Gastrocnemius medialis (tissue), 4 donors: ENCODE measurements at regions of chr4 and their contacts with region 1.

Region 1: DNA sequence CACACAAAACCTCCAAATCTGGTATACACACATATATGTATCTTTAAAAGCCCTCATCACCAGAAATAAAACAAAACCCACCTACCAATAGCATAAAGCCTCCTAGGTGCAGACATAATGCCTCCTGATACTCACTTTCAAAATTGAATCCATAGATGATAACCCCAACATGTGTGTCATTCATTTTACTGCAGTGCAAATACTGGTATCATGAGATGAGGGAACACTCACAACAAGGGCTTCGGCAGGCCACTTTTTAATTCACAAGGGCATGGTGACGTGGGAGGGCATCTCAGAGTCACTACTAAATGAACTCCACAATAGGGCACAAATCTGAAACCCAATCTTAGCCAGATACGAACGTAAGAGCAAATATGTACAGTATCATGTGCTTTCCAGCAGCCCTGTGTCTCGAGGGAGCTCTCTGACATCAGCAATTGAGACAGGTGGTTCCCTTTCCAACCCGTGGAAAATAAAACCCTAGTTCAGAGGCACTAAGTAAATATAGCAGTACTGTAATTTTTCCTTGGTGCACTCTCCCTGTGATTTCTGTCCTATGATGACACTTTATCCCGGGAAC is 14.1 kb upstream of the PPARGC1A start:
- DNase-seq: peak; percentile 65 to 84
- ATAC-seq: peak; percentile 95 to 97
- H3K4me3 ChIP-seq: peak overlapping the region; percentile 6 to 27 (median 22)
- H3K27ac ChIP-seq: peak overlapping the region; percentile 64 to 84 (median 80)
- H3K4me1 ChIP-seq: peaks cover 12 to 20% of the 10 kb centered on the region in 2 donors
- H3K27me3 ChIP-seq: no peaks in the 10 kb centered on the region
- CTCF ChIP-seq: no peak
- POLR2A ChIP-seq: peak; percentile 37 to 67

Region 2: DNA sequence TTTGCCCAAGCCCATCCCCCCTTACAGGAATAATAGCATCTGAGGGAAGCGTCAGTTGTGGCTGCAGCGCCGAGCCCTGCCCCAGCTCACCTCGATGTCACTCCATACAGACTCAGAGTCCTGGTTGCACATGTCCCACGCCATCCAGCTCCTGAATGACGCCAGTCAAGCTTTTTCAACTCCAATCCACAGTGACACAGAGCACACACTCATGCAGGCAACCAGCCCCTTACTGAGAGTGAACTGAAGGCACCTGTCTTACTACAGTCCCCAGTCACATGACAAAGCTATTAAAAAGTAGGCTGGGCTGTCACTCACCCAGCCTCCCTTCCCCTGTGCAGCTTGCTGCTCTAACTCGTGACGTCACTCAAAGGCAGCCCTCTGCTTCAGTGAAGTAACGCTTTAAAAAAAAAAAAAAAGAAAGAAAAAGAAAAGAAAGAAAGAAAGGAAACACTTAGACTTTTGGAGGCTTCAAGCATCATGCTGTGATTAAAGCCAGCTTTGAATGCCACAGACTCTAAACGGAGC is 14.1 kb before region 1 on chr4 and contains the start of gene PPARGC1A:
- in situ Hi-C with region 1: no loop called
- intact Hi-C with region 1: loop called (anchors 2 kb)
- DNase-seq: peak; percentile 86 to 94
- ATAC-seq: peak; percentile 80 to 84
- H3K4me3 ChIP-seq: peak within 1 kb of the TSS; percentile 65 to 77 (median 69)
- H3K27ac ChIP-seq: peak within 1 kb of the TSS; percentile 84 to 99 (median 90)
- H3K4me1 ChIP-seq: peaks cover 27 to 42% of the 10 kb centered on the region in 2 donors
- H3K27me3 ChIP-seq: no peaks in the 10 kb centered on the region
- CTCF ChIP-seq: no peak
- POLR2A ChIP-seq: peak; percentile 96 to 98
- total RNA-seq, gene PPARGC1A: 30.6 to 68.9 (median 52.3) TPM